Psoas muscle (tissue), 8 donors: ENCODE measurements at regions of chr6 and their contacts with region 1.

Region 1: GRCh38 chr6:144582939-144583613 is 297.9 kb downstream of the UTRN start:
- DNase-seq: peak; percentile 26 to 57
- ATAC-seq: peak; percentile 49 to 74 (median 62)
- H3K4me3 ChIP-seq: peak overlapping the region; percentile 36
- H3K27ac ChIP-seq: no peak overlapping the region
- H3K4me1 ChIP-seq: peaks cover 14% of the 10 kb centered on the region
- H3K27me3 ChIP-seq: no peaks in the 10 kb centered on the region
- CTCF ChIP-seq: no peak

Region 2: GRCh38 chr6:144566868-144567615 is 16.0 kb before region 1 on chr6:
- intact Hi-C with region 1: no loop called
- DNase-seq: no peak
- ATAC-seq: no peak
- H3K4me3 ChIP-seq: no peak overlapping the region
- H3K27ac ChIP-seq: no peak overlapping the region
- H3K4me1 ChIP-seq: no peaks in the 10 kb centered on the region
- H3K27me3 ChIP-seq: no peaks in the 10 kb centered on the region
- CTCF ChIP-seq: no peak

Region 3: GRCh38 chr6:144769142-144769541 is 186.1 kb after region 1 on chr6:
- intact Hi-C with region 1: loop called in 1 of 2 experiments (anchors 5 kb)
- DNase-seq: no peak
- ATAC-seq: peak in 3 of 4 donors; percentile 35 to 71 (median 46)
- H3K4me3 ChIP-seq: no peak overlapping the region
- H3K27ac ChIP-seq: no peak overlapping the region
- H3K4me1 ChIP-seq: peaks cover 12% of the 10 kb centered on the region
- H3K27me3 ChIP-seq: no peaks in the 10 kb centered on the region
- CTCF ChIP-seq: no peak

Region 4: GRCh38 chr6:144835322-144835973 is 252.4 kb after region 1 on chr6:
- intact Hi-C with region 1: no loop called
- DNase-seq: no peak
- ATAC-seq: no peak
- H3K4me3 ChIP-seq: no peak overlapping the region
- H3K27ac ChIP-seq: no peak overlapping the region
- H3K4me1 ChIP-seq: no peaks in the 10 kb centered on the region
- H3K27me3 ChIP-seq: no peaks in the 10 kb centered on the region
- CTCF ChIP-seq: no peak

Region 5: GRCh38 chr6:144931172-144932035 is 348.3 kb after region 1 on chr6:
- intact Hi-C with region 1: loop called (anchors 10 kb)
- DNase-seq: no peak
- ATAC-seq: peak in 1 of 4 donors; percentile 47
- H3K4me3 ChIP-seq: no peak overlapping the region
- H3K27ac ChIP-seq: no peak overlapping the region
- H3K4me1 ChIP-seq: no peaks in the 10 kb centered on the region
- H3K27me3 ChIP-seq: no peaks in the 10 kb centered on the region
- CTCF ChIP-seq: peak; percentile 45

Region 6: GRCh38 chr6:145028144-145028818 is 445.2 kb after region 1 on chr6:
- intact Hi-C with region 1: loop called in 1 of 2 experiments (anchors 5 kb)
- DNase-seq: no peak
- ATAC-seq: peak; percentile 54 to 81 (median 70)
- H3K4me3 ChIP-seq: no peak overlapping the region
- H3K27ac ChIP-seq: no peak overlapping the region
- H3K4me1 ChIP-seq: peaks cover 5% of the 10 kb centered on the region
- H3K27me3 ChIP-seq: no peaks in the 10 kb centered on the region
- CTCF ChIP-seq: peak; percentile 55

Region 7: DNA sequence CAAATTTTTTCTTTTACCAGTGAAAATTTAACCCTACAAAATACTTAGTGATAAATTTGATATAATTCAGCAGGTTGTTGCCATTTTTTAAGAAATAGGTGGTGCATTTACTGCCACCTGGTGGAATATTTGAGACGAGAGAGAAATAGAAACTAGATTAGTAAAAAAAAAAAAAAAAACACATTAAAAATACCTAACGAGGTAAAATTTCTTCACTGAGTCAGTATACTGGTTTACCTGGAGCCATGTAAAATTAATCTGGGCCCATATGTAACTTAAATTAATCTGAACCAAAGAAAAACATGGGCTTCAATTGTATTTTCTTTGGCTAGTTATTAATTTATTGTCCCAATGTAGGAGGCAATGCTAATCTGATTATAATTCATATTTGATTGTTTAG is 631.5 kb after region 1 on chr6:
- intact Hi-C with region 1: loop called (anchors 5 to 10 kb)
- DNase-seq: no peak
- ATAC-seq: no peak
- H3K4me3 ChIP-seq: no peak overlapping the region
- H3K27ac ChIP-seq: no peak overlapping the region
- H3K4me1 ChIP-seq: no peaks in the 10 kb centered on the region
- H3K27me3 ChIP-seq: no peaks in the 10 kb centered on the region
- CTCF ChIP-seq: peak; percentile 58

Region 8: DNA sequence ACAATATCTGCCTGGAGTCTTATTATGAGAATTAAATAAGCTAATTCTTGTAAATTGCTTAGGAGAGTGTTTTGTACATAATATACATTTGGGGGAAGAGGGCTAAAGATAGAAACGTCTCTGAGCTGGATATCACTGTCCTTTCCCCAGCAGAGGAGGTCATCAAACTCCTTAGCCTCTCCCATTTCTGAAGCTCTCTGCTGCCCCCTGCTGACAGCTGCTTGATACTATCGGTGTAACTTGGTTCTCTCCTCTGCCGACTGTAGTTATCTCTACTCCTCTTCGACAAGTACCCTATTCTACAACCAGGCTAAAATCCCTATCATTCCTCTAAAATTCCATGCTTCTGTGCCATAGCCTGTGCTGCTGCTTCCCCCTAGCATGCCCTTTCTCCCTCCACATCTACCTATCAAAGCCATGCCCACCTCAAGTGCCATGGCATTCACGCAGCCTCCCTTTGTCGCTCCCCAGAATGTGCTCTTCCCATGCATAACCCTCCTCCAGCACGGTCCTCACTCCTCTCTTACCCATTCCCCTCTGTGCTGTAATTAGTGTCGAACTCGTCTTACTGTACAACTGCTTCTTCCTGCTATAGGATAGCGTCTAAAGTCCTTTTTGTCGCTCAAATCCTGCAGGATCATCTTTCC is 1051.0 kb after region 1 on chr6:
- intact Hi-C with region 1: loop called (anchors 10 kb)
- DNase-seq: peak; percentile 81 to 91
- ATAC-seq: peak; percentile 83 to 95 (median 90)
- H3K4me3 ChIP-seq: no peak overlapping the region
- H3K27ac ChIP-seq: no peak overlapping the region
- H3K4me1 ChIP-seq: peaks cover 40% of the 10 kb centered on the region
- H3K27me3 ChIP-seq: no peaks in the 10 kb centered on the region
- CTCF ChIP-seq: peak; percentile 87